Heart right ventricle (tissue), 16 donors: ENCODE measurements at regions of chr5 and their contacts with region 1.

Region 1: DNA sequence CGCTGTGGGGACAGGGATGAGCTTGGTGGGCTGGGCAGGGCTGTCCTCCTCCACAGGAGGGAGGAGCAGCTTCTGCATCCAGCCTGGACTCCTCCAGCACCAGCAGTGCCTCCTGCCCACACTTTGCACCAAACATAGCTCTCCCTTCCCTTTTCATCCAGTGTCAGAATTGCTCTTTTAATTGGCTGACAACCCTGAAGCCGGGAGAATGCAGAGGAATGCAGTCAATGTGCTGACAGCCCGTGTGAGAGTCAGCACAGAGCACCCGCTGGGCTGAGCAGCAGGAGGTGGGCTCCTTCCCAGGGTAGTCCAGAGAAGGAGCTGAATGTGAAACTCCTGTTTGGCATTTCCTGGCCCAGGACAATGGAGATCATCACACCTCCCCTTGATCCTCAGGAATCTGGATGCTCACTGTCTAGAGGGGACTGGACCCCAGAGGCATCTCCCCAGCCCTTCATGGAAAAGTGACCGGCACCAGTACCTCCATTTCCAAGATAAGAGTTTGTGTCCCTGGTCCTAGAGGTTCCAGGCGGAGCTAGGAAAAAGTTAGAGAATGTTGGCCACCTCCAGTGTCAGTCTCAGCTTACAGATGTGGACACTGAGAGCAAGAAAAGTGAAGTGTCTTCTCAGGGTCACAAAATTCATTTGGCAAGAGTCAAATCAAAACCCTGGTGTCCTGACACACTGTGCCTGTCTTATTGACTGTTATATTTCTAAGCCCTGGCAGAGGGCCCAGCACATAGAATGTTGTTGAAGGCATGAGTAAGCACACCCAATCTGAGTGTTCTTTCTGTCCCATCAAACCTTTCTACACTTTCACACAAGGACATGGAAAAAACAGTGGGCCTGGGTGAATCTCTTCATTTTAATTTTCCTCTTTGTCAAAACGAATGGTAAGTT is 202.1 kb downstream of the SNX18 start:
- DNase-seq: peak; percentile 42 to 59
- ATAC-seq: peak; percentile 78 to 93 (median 88)
- H3K4me3 ChIP-seq: no peak overlapping the region
- H3K27ac ChIP-seq: peak overlapping the region; percentile 34 to 89 (median 75)
- H3K4me1 ChIP-seq: peaks cover 5 to 48% (median 24%) of the 10 kb centered on the region in 9 donors
- H3K27me3 ChIP-seq: no peaks in the 10 kb centered on the region
- CTCF ChIP-seq: peak in 3 of 9 donors; percentile 7 to 23 (median 21)

Region 2: DNA sequence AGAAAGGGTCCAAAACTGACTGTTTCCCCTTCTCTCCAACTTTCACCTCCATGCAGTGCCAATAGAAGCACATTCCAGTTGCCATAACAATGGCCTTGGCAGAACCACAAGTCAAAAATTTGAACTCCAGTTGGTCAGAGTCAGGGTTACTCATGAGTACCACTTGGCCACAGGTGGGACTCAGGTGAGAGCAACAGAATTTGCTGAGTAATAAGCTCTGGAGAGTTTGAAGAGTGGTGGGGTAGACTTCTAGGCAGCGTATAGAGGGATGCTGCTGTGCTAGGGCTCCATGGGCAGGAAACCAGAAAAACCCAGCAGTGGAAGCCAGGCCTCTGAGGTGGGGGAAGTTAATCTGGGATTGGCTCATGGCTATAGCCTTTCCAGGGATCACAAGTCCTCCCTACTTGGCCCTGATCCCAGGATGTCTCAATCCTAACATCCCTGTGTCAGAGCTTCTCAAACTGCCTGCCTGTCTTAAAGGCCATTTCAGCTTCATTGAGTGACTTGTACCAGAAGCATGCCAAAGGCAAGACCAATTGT is 171.9 kb before region 1 on chr5:
- intact Hi-C with region 1: no loop called
- DNase-seq: peak in 1 of 2 donors; percentile 81
- ATAC-seq: peak; percentile 58 to 96 (median 87)
- H3K4me3 ChIP-seq: no peak overlapping the region
- H3K27ac ChIP-seq: peak overlapping the region in 4 of 10 donors; percentile 11 to 27 (median 16)
- H3K4me1 ChIP-seq: peaks cover 2 to 39% (median 25%) of the 10 kb centered on the region in 9 donors
- H3K27me3 ChIP-seq: no peaks in the 10 kb centered on the region
- CTCF ChIP-seq: no peak

Region 3: DNA sequence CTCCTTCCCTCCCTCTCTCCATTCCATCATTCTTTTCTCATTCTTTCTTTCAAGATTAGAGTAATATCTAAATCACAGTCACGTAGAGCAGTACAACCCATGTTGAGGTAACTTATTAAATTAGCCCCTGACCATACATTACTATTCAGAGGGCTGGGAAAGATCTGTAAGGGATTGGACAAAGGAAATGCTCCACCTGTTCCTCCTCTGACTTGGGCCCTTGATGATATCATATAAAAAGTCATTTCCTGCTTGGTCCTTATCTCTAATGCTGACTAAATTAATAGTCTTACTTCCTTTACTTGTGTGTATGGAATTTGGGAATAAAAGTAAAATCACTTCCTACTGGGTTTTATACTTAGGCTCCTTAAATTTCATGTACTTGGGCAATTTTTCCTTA is 161.3 kb before region 1 on chr5:
- intact Hi-C with region 1: no loop called
- DNase-seq: no peak
- ATAC-seq: peak in 6 of 8 donors; percentile 50 to 91 (median 76)
- H3K4me3 ChIP-seq: no peak overlapping the region
- H3K27ac ChIP-seq: peak overlapping the region in 5 of 10 donors; percentile 9 to 48 (median 39)
- H3K4me1 ChIP-seq: peaks cover 0 to 22% (median 6%) of the 10 kb centered on the region in 9 donors
- H3K27me3 ChIP-seq: no peaks in the 10 kb centered on the region
- CTCF ChIP-seq: no peak

Region 4: DNA sequence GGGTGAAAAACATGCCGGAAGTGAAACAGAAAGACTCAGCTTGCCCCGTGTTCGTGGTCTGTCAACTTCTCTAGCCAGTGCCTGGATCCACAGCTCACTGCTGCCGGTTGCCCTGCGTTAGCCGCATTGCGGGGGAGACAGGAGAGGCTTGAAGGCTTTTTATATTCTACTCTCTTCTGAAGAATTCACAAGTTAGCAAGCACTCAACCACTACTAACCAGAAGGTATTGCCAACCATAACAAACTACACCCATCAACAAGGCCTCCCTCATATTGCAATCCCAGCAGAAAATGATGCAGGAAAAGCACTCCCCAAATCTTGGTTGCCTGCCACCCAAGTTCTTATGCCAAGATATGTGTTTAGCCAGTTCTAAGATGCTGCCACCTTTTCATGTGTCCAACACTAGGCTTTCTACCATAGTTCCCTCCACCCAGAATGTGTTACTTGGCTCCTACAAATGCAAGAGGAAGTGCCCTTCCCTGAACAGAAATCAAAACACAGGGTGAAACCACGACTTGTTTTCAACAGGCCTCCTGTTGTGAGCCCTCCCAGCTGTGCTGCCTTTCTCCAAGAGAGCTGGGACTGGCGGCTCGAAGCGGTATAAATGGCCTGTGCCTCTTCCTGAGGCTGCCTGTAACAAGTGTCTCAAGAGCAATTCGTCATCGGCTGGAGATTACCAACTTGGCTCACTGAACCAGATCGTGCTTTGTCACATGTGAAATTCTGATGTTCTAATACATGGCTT is 73.1 kb before region 1 on chr5:
- intact Hi-C with region 1: loop called in 1 of 10 experiments (anchors 10 kb)
- DNase-seq: peak; percentile 83
- ATAC-seq: peak; percentile 91 to 96 (median 93)
- H3K4me3 ChIP-seq: peak overlapping the region in 4 of 10 donors; percentile 10 to 24 (median 21)
- H3K27ac ChIP-seq: peak overlapping the region; percentile 5 to 87 (median 70)
- H3K4me1 ChIP-seq: peaks cover 15 to 51% (median 35%) of the 10 kb centered on the region in 9 donors
- H3K27me3 ChIP-seq: no peaks in the 10 kb centered on the region
- CTCF ChIP-seq: no peak

Region 5: DNA sequence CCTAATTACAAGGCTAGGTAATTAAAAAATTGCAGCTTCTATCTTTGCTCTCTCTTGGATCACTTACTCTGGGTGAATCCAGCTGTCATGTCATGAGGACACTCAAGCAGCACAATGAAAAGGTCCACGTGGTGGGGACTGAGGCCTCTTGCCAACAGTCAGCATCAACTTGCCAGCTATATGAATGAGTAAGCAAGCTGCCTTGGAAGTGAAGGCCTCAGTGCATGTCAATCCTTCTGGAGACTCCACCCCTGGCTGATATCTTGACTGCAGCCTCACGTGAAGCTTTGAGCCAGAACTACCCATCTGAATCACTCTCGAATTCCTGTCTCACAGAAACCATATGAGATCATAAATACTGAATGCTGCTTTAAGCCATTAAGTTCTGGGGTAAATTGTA is 61.6 kb before region 1 on chr5:
- intact Hi-C with region 1: loop called in 2 of 10 experiments (anchors 5 kb)
- DNase-seq: peak; percentile 25 to 31
- ATAC-seq: peak in 4 of 8 donors; percentile 22 to 71 (median 51)
- H3K4me3 ChIP-seq: no peak overlapping the region
- H3K27ac ChIP-seq: no peak overlapping the region
- H3K4me1 ChIP-seq: peaks cover 0 to 34% (median 12%) of the 10 kb centered on the region in 9 donors
- H3K27me3 ChIP-seq: no peaks in the 10 kb centered on the region
- CTCF ChIP-seq: no peak

Region 6: DNA sequence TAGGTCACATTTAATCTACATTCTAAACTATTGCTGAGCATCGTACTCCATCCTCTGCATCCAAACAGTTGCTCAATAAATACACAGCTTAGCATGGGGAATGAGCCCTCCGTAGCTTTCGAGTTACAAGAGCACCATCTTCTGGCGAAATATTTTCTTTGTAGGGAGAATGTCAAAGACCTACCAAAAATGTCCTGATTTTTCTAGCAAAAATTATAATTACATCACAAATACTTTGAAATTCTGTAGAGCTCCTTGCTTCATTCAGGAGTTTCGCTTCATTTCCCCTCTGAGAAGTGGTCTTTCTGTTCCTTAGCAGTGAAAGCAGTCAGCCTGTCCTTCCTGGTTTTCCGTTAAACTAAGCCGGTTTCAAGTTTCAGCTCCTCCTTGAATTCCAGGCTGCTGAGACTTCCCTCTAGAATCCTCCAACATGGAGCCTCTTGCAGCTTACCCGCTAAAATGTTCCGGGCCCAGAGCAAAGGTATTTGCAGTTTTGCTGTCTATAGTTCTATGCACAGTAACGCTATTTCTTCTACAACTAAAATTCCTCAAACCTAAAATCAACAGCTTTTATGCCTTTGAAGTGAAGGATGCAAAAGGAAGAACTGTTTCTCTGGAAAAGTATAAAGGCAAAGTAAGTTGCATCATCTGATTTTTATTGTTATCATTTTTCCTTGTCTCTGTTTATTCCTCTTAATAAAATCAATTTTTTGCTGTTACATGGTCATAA is 440.3 kb after region 1 on chr5 and contains the start of gene GPX8:
- intact Hi-C with region 1: no loop called
- DNase-seq: peak in 1 of 2 donors; percentile 38
- ATAC-seq: peak; percentile 72 to 93 (median 90)
- H3K4me3 ChIP-seq: peak within 1 kb of the TSS in 9 of 10 donors; percentile 32 to 55 (median 51)
- H3K27ac ChIP-seq: peak within 1 kb of the TSS in 9 of 10 donors; percentile 11 to 81 (median 59)
- H3K4me1 ChIP-seq: peaks cover 0 to 17% (median 5%) of the 10 kb centered on the region in 9 donors
- H3K27me3 ChIP-seq: peaks cover 0 to 13% (median 3%) of the 10 kb centered on the region in 7 donors
- CTCF ChIP-seq: peak; percentile 20 to 74 (median 60)
- total RNA-seq, gene GPX8: 3.0 to 13.5 (median 6.0) TPM